Aorta (tissue), 5 donors: ENCODE measurements at regions of chr11 and their contacts with region 1.

Region 1: DNA sequence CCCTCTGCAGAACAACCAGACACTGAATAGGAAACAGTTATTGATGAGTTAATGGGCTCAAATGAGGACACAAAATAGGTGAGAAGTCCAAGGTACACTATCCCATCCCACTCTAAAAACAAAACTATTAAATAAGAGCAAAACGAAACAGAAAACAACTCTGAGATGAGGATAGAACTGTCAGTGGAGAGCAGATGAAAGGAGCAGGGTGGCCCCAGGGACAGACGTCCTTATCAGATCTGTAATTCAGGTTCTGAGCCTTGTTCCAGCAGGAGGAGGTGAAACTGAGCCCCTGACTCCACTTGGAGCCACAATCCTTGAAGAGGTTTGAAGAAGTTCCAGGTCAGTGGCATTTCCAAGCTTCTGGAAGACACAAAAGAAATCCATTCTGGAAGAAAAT is 8.5 kb upstream of the SNX19 start:
- DNase-seq: no peak
- ATAC-seq: no peak
- H3K4me3 ChIP-seq: no peak overlapping the region
- H3K27ac ChIP-seq: no peak overlapping the region
- H3K4me1 ChIP-seq: no peaks in the 10 kb centered on the region
- H3K27me3 ChIP-seq: no peaks in the 10 kb centered on the region

Region 2: DNA sequence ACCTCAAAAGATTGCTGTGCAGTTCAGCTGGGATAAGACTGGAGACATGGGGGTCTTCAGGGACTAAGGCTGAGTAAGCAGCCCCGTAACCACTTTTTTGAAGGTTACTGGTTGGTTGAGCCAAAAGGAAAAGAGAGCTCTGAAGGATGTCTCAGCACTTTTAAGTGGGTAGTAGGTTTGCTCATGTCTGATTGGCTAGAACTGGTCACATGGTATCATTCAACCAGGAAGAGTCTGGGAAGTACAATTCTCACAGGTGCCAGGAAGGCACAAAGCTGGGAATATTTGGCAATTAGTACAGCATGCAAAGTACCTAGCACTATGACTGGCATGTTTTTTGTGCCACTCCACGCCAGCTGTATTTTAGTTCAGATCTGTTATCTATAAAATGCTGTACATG is 66.6 kb before region 1 on chr11:
- intact Hi-C with region 1: no loop called
- DNase-seq: no peak
- ATAC-seq: no peak
- H3K4me3 ChIP-seq: no peak overlapping the region
- H3K27ac ChIP-seq: no peak overlapping the region
- H3K4me1 ChIP-seq: peaks cover 0 to 3% of the 10 kb centered on the region in 2 donors
- H3K27me3 ChIP-seq: no peaks in the 10 kb centered on the region

Region 3: GRCh38 chr11:130979386-130979972 is 54.7 kb after region 1 on chr11:
- intact Hi-C with region 1: loop called in 1 of 2 experiments (anchors 5 kb)
- DNase-seq: no peak
- ATAC-seq: no peak
- H3K4me3 ChIP-seq: no peak overlapping the region
- H3K27ac ChIP-seq: no peak overlapping the region
- H3K4me1 ChIP-seq: no peaks in the 10 kb centered on the region
- H3K27me3 ChIP-seq: no peaks in the 10 kb centered on the region

Region 4: DNA sequence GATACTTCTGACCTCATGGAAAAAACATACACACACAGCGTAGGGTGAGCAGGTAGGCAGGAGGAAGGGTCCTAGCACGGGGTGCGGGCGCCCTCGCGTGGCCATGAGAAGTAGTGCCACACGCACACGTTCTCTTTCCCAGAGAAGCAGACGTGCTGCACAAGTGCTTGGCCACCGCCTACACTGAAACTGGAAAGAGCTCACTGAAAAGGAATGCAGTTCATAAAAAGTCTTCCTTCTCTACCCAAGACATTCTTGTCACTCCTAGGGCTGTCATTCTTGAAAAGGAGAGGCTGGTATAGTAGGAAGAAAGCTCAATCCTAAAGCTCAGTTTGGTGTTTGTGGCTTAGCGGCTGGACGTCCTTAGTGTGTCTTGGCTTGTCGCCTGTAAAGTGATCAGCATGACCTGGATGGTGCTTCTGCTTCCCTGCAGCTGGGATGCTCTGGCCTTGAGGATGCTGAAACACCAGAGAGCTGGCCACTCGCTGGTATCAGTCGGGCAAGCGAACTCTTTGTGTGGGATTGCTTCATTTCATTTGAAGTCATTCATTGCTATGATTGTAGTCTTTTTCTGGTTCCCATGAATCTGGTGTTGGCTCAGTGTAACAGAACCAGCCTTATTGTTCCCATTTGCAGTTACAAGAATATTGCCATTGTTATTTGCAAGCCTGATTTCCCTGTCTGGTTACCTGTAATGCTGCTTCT is 749.4 kb after region 1 on chr11:
- intact Hi-C with region 1: loop called in 1 of 2 experiments (anchors 5 kb)
- DNase-seq: peak; percentile 62 to 88
- ATAC-seq: peak; percentile 82
- H3K4me3 ChIP-seq: no peak overlapping the region
- H3K27ac ChIP-seq: no peak overlapping the region
- H3K4me1 ChIP-seq: no peaks in the 10 kb centered on the region
- H3K27me3 ChIP-seq: no peaks in the 10 kb centered on the region